Calu3 (cell line): ENCODE measurements at regions of chr17 and their contacts with region 1.

Region 1: DNA sequence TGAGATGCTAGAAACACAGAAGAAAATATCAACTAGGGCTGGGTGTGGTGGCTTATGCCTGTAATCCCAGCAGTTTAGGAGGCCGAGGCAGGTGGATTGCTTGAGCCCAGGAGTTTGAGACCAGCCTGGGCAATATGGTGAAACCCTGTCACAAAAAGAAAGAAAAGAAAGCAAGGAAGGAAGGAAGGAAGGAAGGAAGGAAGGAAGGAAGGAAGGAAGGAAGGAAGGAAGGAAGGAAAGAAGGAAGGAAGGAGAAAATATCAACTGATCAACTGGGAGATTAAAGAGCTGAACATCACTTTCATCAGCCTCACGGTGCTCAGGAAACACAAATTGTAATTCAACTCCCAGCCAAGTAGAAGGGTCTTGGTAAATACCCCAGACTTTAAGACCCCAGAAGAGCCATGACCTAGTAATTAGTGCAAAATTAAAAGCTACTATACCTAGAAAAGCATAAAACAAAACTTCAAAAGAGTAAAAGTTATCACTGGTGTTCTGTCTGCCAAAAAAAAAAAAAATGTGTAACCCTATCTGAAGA is 27.8 kb upstream of the SLFN13 start:
- DNase-seq: no peak
- H3K4me3 Mint-ChIP-seq: no peak overlapping the region
- H3K27ac Mint-ChIP-seq: no peak overlapping the region
- H3K4me1 Mint-ChIP-seq: no peaks in the 10 kb centered on the region
- H3K27me3 Mint-ChIP-seq: peaks cover 62% of the 10 kb centered on the region
- CTCF ChIP-seq: no peak

Region 2: DNA sequence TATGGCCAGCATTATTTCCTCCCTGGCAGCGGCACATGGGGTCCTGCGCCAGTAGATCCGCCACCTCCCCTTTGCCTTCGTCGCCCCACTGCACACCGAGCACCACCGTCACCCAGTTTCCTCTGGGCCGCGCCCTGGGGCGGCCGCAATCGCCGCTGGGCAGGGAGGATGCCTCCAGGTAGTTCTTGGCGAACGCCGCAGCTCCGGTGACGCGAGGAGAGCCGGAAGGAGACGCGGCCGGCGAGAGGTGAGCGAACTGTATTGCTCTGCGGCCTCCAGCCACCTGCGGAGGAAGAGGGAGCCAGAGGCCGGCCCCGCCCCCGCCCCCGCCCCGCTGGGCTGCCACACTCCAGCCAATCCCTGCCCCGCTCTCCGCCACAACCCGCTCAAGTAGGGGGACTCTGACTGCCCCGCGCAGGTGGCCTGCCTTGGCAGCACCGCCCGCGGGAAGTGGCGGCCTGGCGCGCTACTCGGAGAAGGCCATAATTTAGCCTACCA is 15.9 kb before region 1 on chr17:
- CTCF ChIA-PET with region 1: no interaction called
- intact Hi-C with region 1: loop called (anchors 2 kb)
- DNase-seq: peak; percentile 80
- H3K4me3 Mint-ChIP-seq: peak overlapping the region; percentile 74
- H3K27ac Mint-ChIP-seq: peak overlapping the region; percentile 60
- H3K4me1 Mint-ChIP-seq: peaks cover 13% of the 10 kb centered on the region
- H3K27me3 Mint-ChIP-seq: peaks cover 24% of the 10 kb centered on the region
- CTCF ChIP-seq: no peak